Activated T-helper 2 cell treated with anti-CD3 and anti-CD28 coated beads, Interferon-gamma antibody, Interleukin-2, Interleukin-4, amounts not matched to agents 10 μg/mL and 5 μg/mL and 100 μg/mL, durations not matched to agents 14 hours and 24 hours and 36 hours (primary cell): ENCODE measurements at regions of chr12 and their contacts with region 1.

Region 1: GRCh38 chr12:32139064-32139421 is 32.4 kb downstream of the BICD1 start:
- DNase-seq: peak; percentile 16
- H3K4me3 Mint-ChIP-seq: peak overlapping the region; percentile 47
- H3K27ac Mint-ChIP-seq: no peak overlapping the region
- H3K4me1 Mint-ChIP-seq: peaks cover 24% of the 10 kb centered on the region
- H3K27me3 Mint-ChIP-seq: peaks cover 56% of the 10 kb centered on the region

Region 2: DNA sequence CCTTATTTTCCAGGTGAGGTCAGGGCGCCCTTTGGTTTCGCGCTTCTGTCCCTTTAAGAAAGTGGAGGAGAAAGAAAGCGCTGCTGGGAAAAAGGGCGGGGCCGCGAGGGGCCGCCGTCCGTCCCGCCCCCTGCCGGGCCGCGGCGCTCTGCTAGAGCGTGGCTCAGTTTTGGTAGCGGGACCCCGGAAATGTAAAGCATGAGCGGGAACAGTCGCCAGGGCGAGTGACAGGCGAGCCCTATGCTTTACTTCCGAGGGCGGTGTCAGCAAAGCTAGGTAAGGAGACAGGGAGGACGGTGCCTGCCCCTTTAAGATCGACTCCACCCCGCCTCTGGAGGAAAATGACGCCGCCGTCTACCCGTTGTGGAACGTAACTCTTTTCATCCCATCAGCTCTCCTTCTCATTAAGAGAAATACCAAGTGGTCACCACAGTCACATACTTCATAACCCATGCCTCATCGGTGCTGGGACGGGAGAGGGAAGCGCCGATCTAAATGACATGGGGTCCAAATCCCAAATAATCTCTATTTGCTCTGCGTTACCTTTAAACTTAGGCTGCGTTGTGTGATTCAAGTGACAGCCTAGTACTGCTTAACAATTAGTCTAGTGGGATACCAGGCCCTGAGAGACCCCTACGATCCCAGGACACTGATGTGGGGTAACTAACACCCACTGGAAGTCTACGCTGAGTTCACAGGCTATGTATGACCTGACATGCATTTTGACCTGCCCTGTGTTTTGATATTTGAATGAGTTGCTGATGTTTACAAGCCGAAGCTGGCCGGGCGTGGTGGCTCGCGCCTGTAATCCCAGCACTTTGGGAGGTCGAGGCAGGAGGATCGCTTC is 479.7 kb before region 1 on chr12 and contains the start of gene ETFBKMT:
- intact Hi-C with region 1: loop called (anchors 1 kb)
- DNase-seq: peak; percentile 95
- H3K4me3 Mint-ChIP-seq: peak within 1 kb of the TSS; percentile 95
- H3K27ac Mint-ChIP-seq: peak within 1 kb of the TSS; percentile 97
- H3K4me1 Mint-ChIP-seq: peaks cover 5% of the 10 kb centered on the region
- H3K27me3 Mint-ChIP-seq: no peaks in the 10 kb centered on the region
- total RNA-seq, gene ETFBKMT: 0.37 and 0.39 TPM in 2 replicates

Region 3: DNA sequence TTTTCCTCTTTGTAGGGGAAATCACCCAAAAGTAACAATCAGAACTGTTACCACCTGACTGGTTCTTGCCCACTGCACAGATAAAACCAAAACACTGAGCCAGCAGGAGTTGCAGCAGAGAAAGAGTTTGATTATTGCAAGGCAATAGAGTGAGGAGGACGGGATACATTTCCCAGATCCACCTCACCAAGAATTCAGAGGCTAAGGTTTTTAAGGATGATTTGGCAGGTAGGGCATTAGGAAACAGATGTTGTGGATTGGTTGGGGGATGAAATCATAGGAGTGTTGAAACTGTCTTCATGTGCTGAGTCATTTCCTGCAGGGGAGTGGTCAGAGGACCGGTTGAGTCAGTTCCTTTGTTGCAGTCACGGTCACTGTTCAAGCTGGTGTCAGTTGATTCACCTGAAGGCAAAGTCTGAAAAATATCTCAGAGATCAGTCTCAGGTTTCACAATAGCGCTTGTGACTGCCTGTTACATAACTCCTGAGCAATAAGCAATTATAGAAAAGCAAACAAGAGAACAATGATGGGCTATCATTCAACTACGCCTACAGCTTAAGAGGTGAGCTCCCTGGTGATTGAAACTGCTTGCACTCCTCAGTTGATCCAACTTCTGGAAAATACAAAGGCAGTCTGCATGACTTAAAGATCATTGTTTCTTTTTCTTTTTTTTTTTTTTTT is 389.9 kb before region 1 on chr12:
- intact Hi-C with region 1: loop called (anchors 5 kb)
- DNase-seq: peak; percentile 67
- H3K4me3 Mint-ChIP-seq: no peak overlapping the region
- H3K27ac Mint-ChIP-seq: peak overlapping the region; percentile 5
- H3K4me1 Mint-ChIP-seq: peaks cover 23% of the 10 kb centered on the region
- H3K27me3 Mint-ChIP-seq: peaks cover 20% of the 10 kb centered on the region

Region 4: GRCh38 chr12:31989571-31990362 is 149.3 kb before region 1 on chr12:
- intact Hi-C with region 1: loop called (anchors 2 kb)
- DNase-seq: no peak
- H3K4me3 Mint-ChIP-seq: peak overlapping the region; percentile 5
- H3K27ac Mint-ChIP-seq: peak overlapping the region; percentile 69
- H3K4me1 Mint-ChIP-seq: peaks cover 41% of the 10 kb centered on the region
- H3K27me3 Mint-ChIP-seq: no peaks in the 10 kb centered on the region

Region 5: DNA sequence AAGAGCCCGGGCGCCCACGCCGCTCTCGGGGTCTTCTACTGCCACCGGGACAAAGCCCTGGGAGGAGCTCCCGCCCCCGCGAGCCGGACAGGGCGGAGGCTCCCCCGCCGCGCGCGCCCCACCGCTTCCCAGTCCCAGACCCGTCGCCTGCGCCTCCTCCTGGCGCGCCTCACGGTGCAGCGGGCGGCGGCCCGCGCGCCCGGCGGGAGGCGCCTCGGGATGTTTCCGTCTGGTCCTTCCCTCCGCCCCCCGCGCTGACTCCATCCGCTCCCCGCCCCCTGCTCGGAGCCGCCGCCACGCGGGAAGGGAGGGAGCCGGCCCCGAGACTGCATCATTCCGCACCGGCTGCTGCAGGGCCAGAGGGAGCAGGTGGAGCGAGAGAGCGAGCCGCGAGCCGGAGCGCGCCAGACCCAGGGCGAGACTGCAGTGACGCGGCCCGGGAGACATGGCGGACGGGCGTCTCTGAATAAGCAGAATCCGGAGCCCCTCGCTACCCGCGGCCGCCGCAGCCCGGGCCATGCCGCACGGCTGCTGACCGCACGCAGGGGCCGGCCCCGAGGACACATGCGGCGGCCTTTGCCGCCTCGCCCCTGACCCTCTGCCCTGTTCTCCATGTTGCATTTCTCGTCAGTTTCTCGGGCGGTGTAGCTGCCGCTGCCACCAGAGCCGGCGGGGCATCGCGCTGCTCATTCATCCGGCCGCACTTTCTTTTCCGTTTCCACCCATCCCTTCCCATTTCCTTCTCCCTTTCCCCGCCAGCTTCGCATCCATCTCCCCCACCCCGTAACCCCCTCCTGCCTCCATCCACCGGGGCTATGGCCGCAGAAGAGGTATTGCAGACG is 32.3 kb before region 1 on chr12 and contains the start of gene BICD1:
- intact Hi-C with region 1: loop called (anchors 1 kb)
- DNase-seq: peak; percentile 65
- H3K4me3 Mint-ChIP-seq: peak within 1 kb of the TSS; percentile 91
- H3K27ac Mint-ChIP-seq: peak within 1 kb of the TSS; percentile 81
- H3K4me1 Mint-ChIP-seq: peaks cover 26% of the 10 kb centered on the region
- H3K27me3 Mint-ChIP-seq: peaks cover 16% of the 10 kb centered on the region
- total RNA-seq, gene BICD1: 8.0 and 8.8 TPM in 2 replicates

Region 6: GRCh38 chr12:32181498-32182175 is 42.6 kb after region 1 on chr12:
- intact Hi-C with region 1: no loop called
- DNase-seq: no peak
- H3K4me3 Mint-ChIP-seq: no peak overlapping the region
- H3K27ac Mint-ChIP-seq: no peak overlapping the region
- H3K4me1 Mint-ChIP-seq: no peaks in the 10 kb centered on the region
- H3K27me3 Mint-ChIP-seq: no peaks in the 10 kb centered on the region

Region 7: DNA sequence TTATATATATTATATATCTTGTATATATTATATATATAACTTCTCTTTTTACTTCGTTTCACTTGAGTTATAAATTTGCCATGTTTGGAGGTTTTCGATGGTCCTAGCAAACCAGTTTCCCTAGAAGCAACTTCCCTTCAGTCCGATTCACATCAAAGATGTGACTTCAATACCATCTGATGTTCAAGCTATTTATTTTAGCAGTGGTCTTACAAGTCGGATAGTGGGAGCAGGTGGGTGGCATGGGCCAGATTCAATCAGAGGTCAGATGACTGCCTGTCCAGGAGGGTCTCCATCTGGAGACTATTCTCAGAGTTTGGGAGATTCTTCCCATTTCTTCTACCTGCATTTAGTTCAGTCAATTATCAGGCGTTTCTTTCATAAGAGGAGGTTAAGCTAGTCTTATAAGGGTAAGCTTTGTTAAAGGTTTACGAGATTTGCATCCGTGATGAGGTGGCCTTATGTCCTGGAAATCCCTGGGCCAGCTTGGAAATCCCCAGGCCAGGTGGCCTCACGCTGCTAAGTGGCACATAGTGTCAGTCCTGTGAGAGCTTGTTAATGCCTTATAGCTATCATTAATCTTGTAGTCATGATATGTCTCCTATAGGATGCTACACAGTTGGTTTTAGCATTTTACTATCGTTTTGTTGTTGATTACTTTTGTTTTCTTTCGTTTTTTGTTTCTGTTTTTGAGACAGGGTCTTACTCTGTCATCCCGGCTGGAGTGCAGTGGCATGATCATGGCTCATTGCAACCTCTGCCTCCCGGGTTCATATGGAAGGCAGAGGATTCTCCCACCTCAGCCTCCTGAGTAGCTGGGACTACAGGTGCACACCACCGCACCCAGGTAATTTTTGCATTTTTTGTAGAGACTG is 113.4 kb after region 1 on chr12:
- intact Hi-C with region 1: loop called (anchors 10 kb)
- DNase-seq: no peak
- H3K4me3 Mint-ChIP-seq: no peak overlapping the region
- H3K27ac Mint-ChIP-seq: no peak overlapping the region
- H3K4me1 Mint-ChIP-seq: no peaks in the 10 kb centered on the region
- H3K27me3 Mint-ChIP-seq: no peaks in the 10 kb centered on the region